Natural killer cell (primary cell): ENCODE measurements at regions of chr9 and their contacts with region 1.

Region 1: GRCh38 chr9:92790542-92791527 is 26.2 kb upstream of the BICD2 start:
- DNase-seq: peak; percentile 71 to 88
- ATAC-seq: peak; percentile 94 to 100 (median 99)
- H3K4me3 ChIP-seq: no peak overlapping the region
- H3K4me3 Mint-ChIP-seq: no peak overlapping the region
- H3K27ac ChIP-seq: no peak overlapping the region
- H3K27ac Mint-ChIP-seq: peak overlapping the region in 1 of 2 donors; percentile 78
- H3K4me1 ChIP-seq: no peaks in the 10 kb centered on the region
- H3K4me1 Mint-ChIP-seq: peaks cover 8 to 10% of the 10 kb centered on the region in 2 donors
- H3K27me3 ChIP-seq: no peaks in the 10 kb centered on the region
- H3K27me3 Mint-ChIP-seq: peaks cover 15 to 25% of the 10 kb centered on the region in 2 donors
- CTCF ChIP-seq: peak; percentile 90

Region 2: DNA sequence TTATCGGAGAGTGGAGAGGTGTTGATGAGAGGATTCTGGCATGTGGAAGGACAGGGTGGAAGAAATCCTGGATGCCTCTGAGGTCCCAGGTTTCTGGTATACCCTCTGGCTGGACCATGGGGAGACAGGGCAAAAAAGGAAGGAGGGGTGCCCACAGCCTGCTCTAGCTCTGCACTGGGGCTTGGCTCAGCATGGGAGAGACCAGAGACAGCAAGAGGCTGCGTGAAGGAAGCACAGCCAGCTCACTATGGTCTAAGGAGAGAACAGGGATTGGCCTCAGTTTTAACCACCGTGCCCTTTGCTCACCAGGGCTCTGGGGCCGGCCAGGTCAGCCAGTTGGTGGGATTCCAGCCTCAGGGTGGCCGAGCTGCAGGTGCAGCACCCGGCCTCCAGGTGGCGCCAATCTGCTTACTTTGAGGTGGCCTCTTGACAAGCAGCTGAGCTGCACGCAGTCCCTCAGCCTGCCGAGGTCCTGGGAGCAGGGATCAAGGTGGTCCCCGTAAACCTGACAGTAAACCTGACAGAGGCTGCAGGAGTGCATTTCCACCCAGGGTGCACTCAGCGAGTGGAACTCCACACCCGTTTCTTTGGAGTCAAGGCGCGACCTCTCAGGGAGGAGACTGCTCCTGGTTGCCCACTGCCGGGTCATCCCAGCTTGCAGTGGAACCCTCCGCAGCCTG is 650.6 kb before region 1 on chr9:
- intact Hi-C with region 1: loop called (anchors 2 kb)
- DNase-seq: peak; percentile 64 to 79
- ATAC-seq: peak; percentile 77 to 87 (median 83)
- H3K4me3 ChIP-seq: no peak overlapping the region
- H3K4me3 Mint-ChIP-seq: no peak overlapping the region
- H3K27ac ChIP-seq: no peak overlapping the region
- H3K27ac Mint-ChIP-seq: no peak overlapping the region
- H3K4me1 ChIP-seq: peaks cover 11% of the 10 kb centered on the region
- H3K4me1 Mint-ChIP-seq: peaks cover 15 to 16% of the 10 kb centered on the region in 2 donors
- H3K27me3 ChIP-seq: peaks cover 6% of the 10 kb centered on the region
- H3K27me3 Mint-ChIP-seq: peaks cover 33 to 35% of the 10 kb centered on the region in 2 donors
- CTCF ChIP-seq: peak; percentile 93

Region 3: GRCh38 chr9:92716557-92716956 is 74.3 kb before region 1 on chr9:
- intact Hi-C with region 1: loop called (anchors 1 kb)
- DNase-seq: peak; percentile 75 to 84
- ATAC-seq: peak; percentile 75 to 84 (median 83)
- H3K4me3 ChIP-seq: no peak overlapping the region
- H3K4me3 Mint-ChIP-seq: no peak overlapping the region
- H3K27ac ChIP-seq: no peak overlapping the region
- H3K27ac Mint-ChIP-seq: peak overlapping the region in 1 of 2 donors; percentile 26
- H3K4me1 ChIP-seq: peaks cover 29% of the 10 kb centered on the region
- H3K4me1 Mint-ChIP-seq: peaks cover 26 to 35% of the 10 kb centered on the region in 2 donors
- H3K27me3 ChIP-seq: no peaks in the 10 kb centered on the region
- H3K27me3 Mint-ChIP-seq: no peaks in the 10 kb centered on the region
- CTCF ChIP-seq: peak; percentile 95

Region 4: GRCh38 chr9:93531374-93531773 is 740.5 kb after region 1 on chr9:
- intact Hi-C with region 1: no loop called
- DNase-seq: no peak
- ATAC-seq: no peak
- H3K4me3 ChIP-seq: no peak overlapping the region
- H3K4me3 Mint-ChIP-seq: no peak overlapping the region
- H3K27ac ChIP-seq: no peak overlapping the region
- H3K27ac Mint-ChIP-seq: no peak overlapping the region
- H3K4me1 ChIP-seq: no peaks in the 10 kb centered on the region
- H3K4me1 Mint-ChIP-seq: peaks cover 8 to 34% of the 10 kb centered on the region in 2 donors
- H3K27me3 ChIP-seq: no peaks in the 10 kb centered on the region
- H3K27me3 Mint-ChIP-seq: no peaks in the 10 kb centered on the region
- CTCF ChIP-seq: no peak